ENCODE measurements at regions of chr16 and their contacts with region 1.

Region 1: DNA sequence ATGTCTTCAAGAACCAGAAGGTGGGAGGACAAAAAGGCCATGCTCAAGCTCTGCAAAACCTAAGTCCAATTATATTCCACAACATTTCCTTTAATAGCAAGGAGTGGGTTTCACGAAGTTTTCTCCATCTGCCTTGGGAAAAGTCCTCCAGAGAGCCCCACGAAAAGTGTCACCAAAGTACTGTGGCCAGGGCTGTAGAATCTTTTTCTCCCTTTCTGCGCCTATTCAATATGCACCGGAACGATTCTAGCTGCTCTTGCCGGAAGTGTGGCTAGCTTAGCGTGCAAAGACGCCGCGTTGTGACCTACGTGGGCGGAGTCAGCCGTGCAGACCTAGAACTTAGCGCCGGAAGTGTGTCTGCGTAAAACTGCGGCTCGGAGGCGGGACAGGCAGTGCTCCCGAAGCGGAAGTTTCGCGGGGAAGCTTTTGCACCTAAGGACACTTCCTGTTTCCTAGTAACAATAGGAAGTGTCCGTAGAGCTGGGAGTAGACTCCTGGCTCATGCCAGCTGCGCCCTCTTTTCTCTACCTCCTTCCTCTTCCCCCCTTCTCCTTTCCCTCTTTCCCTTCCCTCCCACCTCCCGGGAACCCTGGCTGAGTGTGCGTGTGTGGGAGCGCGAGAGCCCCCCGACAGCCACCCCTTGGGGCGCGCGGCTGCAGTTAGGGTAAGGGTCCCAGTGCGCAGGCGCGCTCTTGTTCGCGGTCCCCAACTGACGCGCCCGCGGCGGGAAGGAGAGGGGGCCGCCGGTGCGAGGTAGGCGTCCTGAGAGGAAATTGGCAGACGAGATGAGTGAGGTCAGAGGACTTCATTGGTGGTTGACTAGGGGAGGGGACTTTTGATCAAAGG is at the starts of genes ZNF646 and ZNF668:
- DNase-seq: peak; percentile 99 to 100
- ATAC-seq: peak; percentile 91 to 92
- H3K4me3 ChIP-seq: peak within 1 kb of the TSS; percentile 90
- H3K27ac ChIP-seq: peak within 1 kb of the TSS; percentile 98
- H3K4me1 ChIP-seq: peaks cover 19% of the 10 kb centered on the region
- CTCF ChIP-seq: no peak
- EP300 ChIP-seq: no peak
- POLR2A ChIP-seq: peak; percentile 69
- RAD21 ChIP-seq: no peak
- polyA plus RNA-seq, gene ZNF646: 3.0 and 4.3 TPM in 2 replicates
- polyA plus RNA-seq, gene ZNF668: 3.9 and 4.7 TPM in 2 replicates

Region 2: DNA sequence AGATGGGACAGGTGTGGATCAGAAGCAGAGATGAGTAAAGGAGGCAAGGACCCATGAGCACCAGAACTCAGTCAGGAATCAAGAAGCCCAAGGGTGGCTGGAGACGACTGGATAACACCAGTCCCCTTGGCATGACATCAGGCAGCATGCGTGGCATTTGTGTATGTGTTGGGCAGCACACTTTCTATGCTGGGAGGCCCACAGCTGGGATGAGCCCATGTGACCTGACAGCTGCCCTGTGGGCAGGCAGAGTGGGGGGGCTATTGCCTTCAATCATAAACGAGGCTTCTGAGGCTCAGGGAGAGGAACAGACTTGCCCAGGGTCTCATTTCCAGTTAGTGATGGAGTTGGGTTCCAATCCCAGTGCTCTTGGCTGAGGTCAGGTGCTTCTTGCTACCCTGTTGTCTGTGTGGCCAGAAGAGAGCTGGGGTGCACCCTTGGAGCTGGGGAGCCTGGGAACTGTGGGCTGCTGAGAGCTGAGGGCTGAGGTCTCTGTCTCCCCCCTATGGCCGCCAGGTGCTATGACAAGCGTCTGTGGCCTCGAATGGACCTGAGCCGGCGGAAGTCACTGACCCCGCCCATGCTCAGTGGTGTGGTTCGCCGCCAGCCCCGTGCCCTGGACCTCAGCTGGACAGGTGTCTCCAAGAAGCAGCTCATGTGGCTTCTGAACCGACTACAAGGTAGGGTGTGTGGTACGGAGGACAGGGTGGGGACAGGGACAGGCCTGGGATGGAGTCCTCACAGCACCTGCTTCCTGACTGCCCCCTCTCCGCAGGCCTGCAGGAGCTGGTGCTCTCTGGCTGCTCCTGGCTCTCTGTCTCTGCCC is 132.4 kb before region 1 on chr16:
- CTCF ChIA-PET with region 1: no interaction called
- POLR2A ChIA-PET with region 1: no interaction called
- DNase-seq: peak; percentile 77 to 87
- ATAC-seq: peak; percentile 89 to 96
- H3K4me3 ChIP-seq: no peak overlapping the region
- H3K27ac ChIP-seq: peak overlapping the region; percentile 39 to 73; a peak in 4 of 6 replicates
- H3K4me1 ChIP-seq: peaks cover 19% of the 10 kb centered on the region
- CTCF ChIP-seq: peak; percentile 75
- EP300 ChIP-seq: no peak
- POLR2A ChIP-seq: no peak
- RAD21 ChIP-seq: peak; percentile 77 to 80

Region 3: GRCh38 chr16:30997000-30997886 is 76.9 kb before region 1 on chr16:
- CTCF ChIA-PET with region 1: no interaction called
- POLR2A ChIA-PET with region 1: interaction called, 14 read pairs
- DNase-seq: peak; percentile 93 to 95
- ATAC-seq: peak; percentile 77 to 87
- H3K4me3 ChIP-seq: peak overlapping the region; percentile 61
- H3K27ac ChIP-seq: peak overlapping the region; percentile 97 to 100
- H3K4me1 ChIP-seq: peaks cover 44% of the 10 kb centered on the region
- CTCF ChIP-seq: no peak
- EP300 ChIP-seq: no peak
- POLR2A ChIP-seq: peak; percentile 58
- RAD21 ChIP-seq: peak in 1 of 2 experiments; percentile 16; a peak in 1 of 5 replicates

Region 4: DNA sequence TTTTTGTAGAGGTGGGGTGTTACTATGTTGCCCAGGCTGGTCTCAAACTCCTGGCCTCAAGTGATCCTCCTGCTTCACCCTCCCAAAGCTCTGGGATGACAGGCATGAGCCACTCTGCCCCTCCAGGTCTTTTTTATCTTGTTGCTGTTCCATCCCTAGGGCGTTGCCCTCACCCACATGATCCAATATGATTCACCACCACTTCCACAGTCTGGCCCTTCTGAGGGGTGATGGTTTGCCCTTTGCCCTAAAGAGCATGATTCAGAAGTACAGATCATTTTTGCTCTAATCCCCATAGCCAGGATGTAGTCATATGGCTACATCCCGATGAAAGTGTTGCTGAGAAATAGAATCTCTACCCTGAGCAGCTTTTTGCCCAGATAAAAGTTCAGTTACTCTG is 22.1 kb before region 1 on chr16:
- CTCF ChIA-PET with region 1: interaction called, 5 read pairs
- POLR2A ChIA-PET with region 1: interaction called, 13 read pairs
- DNase-seq: peak; percentile 90
- ATAC-seq: peak; percentile 96 to 98
- H3K4me3 ChIP-seq: no peak overlapping the region
- H3K27ac ChIP-seq: peak overlapping the region; percentile 82 to 88
- H3K4me1 ChIP-seq: peaks cover 18% of the 10 kb centered on the region
- CTCF ChIP-seq: no peak
- EP300 ChIP-seq: no peak
- POLR2A ChIP-seq: no peak
- RAD21 ChIP-seq: no peak; a peak in 2 of 5 replicates

Region 5: DNA sequence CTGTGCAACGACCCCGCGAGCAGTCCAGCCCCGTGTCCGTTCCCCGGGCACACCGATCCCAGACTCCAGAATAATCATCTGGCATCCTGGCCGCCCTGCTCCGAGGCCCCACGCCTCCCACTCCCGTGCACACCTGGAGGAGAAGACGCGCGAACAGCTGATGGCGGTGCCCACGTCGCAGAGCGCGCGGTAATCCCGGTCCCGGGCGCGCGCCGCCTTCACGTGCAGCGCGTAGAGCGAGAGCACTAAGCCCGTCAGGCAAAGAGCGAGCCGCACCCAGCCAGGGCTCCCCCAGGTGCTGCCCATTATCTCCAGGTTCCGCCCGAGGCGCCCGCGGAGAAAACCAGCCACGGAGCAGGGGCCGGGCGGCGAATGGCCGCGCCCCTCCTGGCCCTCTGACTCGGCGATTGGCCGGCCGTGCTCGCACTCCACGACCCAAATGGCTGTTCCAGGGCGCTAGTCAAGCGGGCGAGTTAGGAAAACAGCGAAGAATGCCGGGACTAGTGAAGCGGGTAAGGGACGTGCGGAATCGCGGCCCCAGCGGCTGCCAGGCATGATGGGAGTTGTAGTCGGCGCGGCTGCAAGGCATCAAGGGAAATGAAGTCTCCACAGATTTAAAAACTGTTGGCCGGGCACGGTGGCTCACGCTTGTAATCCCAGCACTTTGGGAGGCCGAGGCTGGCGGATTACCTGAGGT is 20.4 kb after region 1 on chr16 and contains the start of gene VKORC1:
- CTCF ChIA-PET with region 1: interaction called, 3 read pairs
- POLR2A ChIA-PET with region 1: interaction called, 14 read pairs
- DNase-seq: peak; percentile 95 to 99
- ATAC-seq: peak; percentile 94 to 98
- H3K4me3 ChIP-seq: peak within 1 kb of the TSS; percentile 83
- H3K27ac ChIP-seq: peak within 1 kb of the TSS; percentile 82 to 89
- H3K4me1 ChIP-seq: peaks cover 11% of the 10 kb centered on the region; the same call in 2 of the 3 replicates
- CTCF ChIP-seq: no peak
- EP300 ChIP-seq: no peak
- POLR2A ChIP-seq: peak; percentile 62
- RAD21 ChIP-seq: no peak
- polyA plus RNA-seq, gene VKORC1: 101 and 136 TPM in 2 replicates

Region 6: DNA sequence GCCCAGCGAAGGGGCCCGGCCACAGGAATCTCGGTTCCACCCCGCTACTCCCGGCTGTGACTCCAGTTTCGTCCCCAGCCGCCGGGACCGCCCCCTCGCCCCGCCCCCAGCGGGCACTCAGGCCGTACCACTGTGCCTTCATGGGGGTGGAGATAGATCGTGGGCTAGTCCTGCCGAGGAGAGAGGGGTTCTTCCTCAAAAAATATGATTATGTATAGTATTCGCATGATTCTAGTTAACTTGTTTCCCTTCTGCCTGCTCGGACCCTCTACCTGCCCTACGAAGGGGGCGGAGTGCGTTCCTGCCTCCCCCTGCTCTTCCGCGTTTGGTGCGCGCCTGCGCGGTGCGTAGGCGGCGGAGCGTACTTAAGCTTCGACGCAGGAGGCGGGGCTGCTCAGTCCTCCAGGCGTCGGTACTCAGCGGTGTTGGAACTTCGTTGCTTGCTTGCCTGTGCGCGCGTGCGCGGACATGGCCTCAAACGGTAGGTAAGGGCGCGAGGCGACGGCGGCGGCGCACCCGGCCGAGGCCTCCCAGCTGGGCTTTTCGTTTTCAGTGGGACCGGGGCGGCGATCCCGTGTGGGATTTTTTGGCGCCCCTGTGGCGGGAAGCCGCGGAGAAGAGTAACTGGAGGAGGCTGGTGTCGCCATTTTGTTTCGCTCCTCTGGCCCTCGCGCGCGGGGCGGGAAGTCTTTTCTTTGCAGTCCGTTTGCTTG is 105.7 kb after region 1 on chr16 and contains the start of gene FUS:
- CTCF ChIA-PET with region 1: no interaction called
- POLR2A ChIA-PET with region 1: interaction called, 14 read pairs
- DNase-seq: peak; percentile 91 to 93
- ATAC-seq: peak; percentile 75 to 77
- H3K4me3 ChIP-seq: peak within 1 kb of the TSS; percentile 68
- H3K27ac ChIP-seq: peak within 1 kb of the TSS; percentile 92 to 97
- H3K4me1 ChIP-seq: peaks cover 29% of the 10 kb centered on the region
- CTCF ChIP-seq: no peak
- EP300 ChIP-seq: no peak
- POLR2A ChIP-seq: peak; percentile 100
- RAD21 ChIP-seq: no peak
- polyA plus RNA-seq, gene FUS: 168 and 224 TPM in 2 replicates